Ovary (tissue), 10 donors: ENCODE measurements at regions of chr10 and their contacts with region 1.

Region 1: GRCh38 chr10:125160856-125161706 is 718 bp upstream of the CTBP2 start:
- DNase-seq: peak; percentile 81 to 85 (median 83)
- H3K4me3 ChIP-seq: peak overlapping the region; percentile 91
- H3K27ac ChIP-seq: peak overlapping the region; percentile 96 to 97
- H3K4me1 ChIP-seq: peaks cover 2% of the 10 kb centered on the region
- H3K27me3 ChIP-seq: no peaks in the 10 kb centered on the region
- CTCF ChIP-seq: peak in 2 of 3 donors; percentile 39 to 42
- EP300 ChIP-seq: no peak
- POLR2A ChIP-seq: peak; percentile 44

Region 2: DNA sequence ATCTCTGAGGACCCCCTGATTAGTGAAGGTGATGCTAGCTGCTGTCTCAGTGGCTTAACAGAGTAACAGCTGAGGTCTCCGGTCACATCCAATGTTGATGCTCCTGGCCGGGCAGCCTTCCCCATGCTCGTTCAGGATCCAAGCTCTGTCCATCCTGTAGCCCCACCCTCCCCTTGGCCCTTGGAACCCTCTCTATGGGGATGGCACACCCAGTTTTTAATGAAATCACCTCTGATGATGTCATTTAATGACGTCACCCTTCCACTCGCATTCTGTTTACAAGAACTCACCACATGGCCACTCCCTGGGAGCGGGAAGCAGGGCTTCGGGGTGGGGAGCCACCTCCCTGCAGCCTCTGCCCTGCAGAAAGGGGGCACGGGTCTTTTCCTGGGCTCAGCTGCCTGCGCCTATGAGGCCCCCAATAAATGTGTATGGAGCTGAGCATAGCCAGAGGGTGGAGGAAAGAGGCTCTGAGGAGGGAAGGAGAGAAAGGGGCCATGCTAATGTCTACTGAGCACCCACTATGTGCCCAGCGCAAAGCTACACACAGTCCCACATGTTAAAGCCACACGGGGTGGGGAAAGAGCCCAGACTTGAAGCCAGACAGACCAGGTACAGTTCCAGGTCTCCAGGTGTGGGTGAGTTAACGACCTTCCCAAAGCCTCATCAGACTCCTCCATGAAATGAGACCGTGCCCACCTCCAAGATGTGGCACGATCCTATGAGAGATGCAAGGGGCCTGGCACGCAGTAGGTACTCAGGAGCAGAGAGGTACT is 837.8 kb before region 1 on chr10:
- intact Hi-C with region 1: no loop called
- DNase-seq: peak in 1 of 5 donors; percentile 11
- H3K4me3 ChIP-seq: no peak overlapping the region
- H3K27ac ChIP-seq: no peak overlapping the region
- H3K4me1 ChIP-seq: no peaks in the 10 kb centered on the region
- H3K27me3 ChIP-seq: no peaks in the 10 kb centered on the region
- CTCF ChIP-seq: no peak
- EP300 ChIP-seq: no peak
- POLR2A ChIP-seq: no peak

Region 3: GRCh38 chr10:124911124-124912067 is 249.7 kb before region 1 on chr10:
- intact Hi-C with region 1: loop called in 2 of 4 experiments (anchors 2 to 5 kb)
- DNase-seq: peak in 1 of 5 donors; percentile 32
- H3K4me3 ChIP-seq: no peak overlapping the region
- H3K27ac ChIP-seq: peak overlapping the region; percentile 5 to 79
- H3K4me1 ChIP-seq: peaks cover 5% of the 10 kb centered on the region
- H3K27me3 ChIP-seq: no peaks in the 10 kb centered on the region
- CTCF ChIP-seq: no peak
- EP300 ChIP-seq: no peak
- POLR2A ChIP-seq: no peak

Region 4: DNA sequence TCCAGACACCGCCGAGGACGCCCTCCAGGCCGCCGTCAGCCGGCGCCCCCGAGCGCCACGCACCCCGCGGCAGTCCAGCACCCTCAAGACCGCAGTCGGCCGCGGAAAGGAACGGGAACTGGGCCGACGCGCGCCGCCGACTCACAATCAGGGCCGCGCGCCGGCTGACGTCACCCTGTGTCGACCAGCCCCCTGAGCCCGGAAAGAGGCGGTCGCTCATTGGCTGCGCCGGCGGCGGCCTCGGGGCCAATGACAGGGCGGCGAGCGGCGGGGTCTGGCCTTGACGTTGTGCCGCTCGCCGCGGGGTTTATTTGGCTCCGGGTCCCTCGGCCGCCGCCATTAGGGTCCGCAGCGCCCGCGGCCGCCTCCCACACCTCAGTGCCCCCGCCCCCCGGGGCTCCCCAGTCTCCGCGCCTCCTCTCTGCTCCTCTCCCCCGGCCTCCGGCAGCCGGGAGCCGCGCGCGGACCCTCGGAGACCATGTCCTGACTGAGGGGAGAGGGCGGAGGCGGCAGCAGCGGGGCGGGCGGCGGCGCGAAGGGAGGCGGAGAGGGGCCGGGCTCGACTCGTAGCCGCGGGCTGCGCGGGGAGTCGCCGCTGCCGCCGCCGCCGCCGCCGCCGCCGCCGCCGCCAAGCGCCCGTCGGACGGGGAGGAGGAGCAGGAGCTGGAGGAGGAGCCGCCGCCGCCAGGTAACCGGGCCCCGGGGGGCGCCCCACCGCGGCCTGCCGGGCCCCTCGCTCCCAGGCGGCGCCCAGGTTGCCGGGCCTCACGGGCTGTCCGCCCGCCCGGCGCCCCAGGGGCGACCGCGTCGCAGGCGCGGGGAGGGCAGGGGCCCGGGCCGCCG is 244.3 kb before region 1 on chr10:
- intact Hi-C with region 1: loop called in 2 of 4 experiments (anchors 2 to 5 kb)
- DNase-seq: peak; percentile 98 to 100 (median 99)
- H3K4me3 ChIP-seq: peak overlapping the region; percentile 77
- H3K27ac ChIP-seq: peak overlapping the region; percentile 97 to 98
- H3K4me1 ChIP-seq: peaks cover 6% of the 10 kb centered on the region
- H3K27me3 ChIP-seq: no peaks in the 10 kb centered on the region
- CTCF ChIP-seq: peak in 2 of 3 donors; percentile 14 to 23
- EP300 ChIP-seq: no peak
- POLR2A ChIP-seq: peak; percentile 95

Region 5: DNA sequence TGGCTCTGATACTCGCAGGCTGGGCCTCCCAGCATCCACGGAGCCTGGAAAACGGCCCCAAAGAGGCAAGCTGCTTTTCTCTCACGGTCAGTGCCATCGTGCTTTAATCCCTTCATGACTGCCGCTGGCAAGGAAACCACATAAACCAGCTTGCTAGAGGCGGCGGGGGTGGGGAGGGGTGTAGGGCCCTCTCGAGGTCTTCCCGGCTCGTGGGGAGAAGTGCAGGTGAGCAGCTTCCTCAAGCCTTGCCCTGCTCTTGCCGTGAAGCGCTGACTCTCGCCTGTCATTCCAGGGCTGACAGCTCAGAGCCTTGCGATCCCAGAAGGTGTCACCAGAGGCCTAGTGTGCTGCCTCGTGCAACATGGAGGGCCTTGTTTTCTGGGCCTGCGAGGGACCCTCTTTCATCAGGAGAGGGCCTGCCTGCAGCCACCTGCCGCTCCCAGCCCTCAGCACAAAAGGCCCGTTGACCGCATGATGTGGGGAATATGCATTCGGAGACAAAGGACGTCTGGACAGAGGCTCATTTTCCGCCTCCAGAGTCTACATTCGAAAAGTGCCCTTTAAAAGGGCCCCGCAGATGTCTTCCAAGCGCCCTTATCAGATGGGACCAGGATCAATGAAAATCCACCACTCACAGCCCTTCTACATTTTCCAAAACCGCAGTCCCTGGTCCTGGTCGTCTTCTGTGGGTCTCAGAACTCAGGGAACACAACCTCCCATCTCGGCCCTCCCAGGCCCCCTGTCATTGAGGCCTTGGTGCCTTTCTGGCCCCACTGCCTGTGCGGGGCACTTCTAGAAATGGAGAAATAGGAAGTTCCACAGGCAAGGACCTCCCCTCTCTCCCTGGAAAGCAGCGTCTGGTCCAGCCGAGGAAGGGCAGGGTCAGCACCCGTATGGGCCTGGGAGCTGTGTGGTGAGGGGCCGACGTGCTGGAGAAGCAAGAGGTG is 160.4 kb before region 1 on chr10:
- intact Hi-C with region 1: loop called in 1 of 4 experiments (anchors 5 kb)
- DNase-seq: peak in 4 of 5 donors; percentile 28 to 50 (median 46)
- H3K4me3 ChIP-seq: no peak overlapping the region
- H3K27ac ChIP-seq: peak overlapping the region; percentile 26 to 72
- H3K4me1 ChIP-seq: peaks cover 43% of the 10 kb centered on the region
- H3K27me3 ChIP-seq: no peaks in the 10 kb centered on the region
- CTCF ChIP-seq: peak in 1 of 3 donors; percentile 16
- EP300 ChIP-seq: no peak
- POLR2A ChIP-seq: no peak

Region 6: DNA sequence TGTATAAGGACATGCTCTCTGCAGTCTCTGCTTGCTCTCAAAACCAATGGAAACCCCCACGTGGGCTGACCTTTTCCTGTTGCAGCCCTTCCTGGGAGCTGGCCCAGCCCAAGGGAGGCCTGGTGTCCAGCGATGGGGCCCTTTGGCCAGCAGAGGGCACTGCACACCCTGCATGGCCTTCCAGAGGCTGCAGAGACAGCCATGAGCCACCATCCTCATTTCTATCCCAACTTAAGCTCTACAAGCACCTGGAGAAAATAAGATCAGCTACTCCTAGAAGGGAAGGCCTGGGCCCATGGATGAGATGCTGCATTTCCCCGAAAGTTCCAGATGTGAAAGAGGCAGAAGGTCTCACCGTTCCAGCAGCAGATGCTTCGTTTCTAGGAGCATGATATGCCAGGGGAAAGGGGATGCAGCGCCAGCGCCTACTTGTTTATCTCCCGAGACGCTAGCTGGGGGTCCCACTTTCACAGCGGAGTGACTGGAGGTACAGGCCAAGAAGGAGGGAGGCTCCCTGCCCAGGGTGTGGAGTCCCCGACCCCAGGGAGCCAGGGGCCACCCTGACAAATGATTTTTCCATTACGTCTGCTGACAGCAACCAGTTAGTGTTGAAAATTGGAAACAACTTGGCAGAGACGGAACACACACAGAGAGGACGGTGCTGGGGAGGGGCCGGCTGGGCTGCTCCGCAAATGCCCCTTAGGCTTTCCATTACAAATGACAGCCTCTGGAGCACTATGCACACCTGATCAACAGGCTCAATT is 112.8 kb before region 1 on chr10:
- intact Hi-C with region 1: loop called in 2 of 4 experiments (anchors 5 to 10 kb)
- DNase-seq: peak; percentile 87 to 93 (median 91)
- H3K4me3 ChIP-seq: no peak overlapping the region
- H3K27ac ChIP-seq: peak overlapping the region; percentile 54 to 79
- H3K4me1 ChIP-seq: peaks cover 28% of the 10 kb centered on the region
- H3K27me3 ChIP-seq: no peaks in the 10 kb centered on the region
- CTCF ChIP-seq: peak; percentile 90 to 96 (median 92)
- EP300 ChIP-seq: no peak
- POLR2A ChIP-seq: no peak

Region 7: DNA sequence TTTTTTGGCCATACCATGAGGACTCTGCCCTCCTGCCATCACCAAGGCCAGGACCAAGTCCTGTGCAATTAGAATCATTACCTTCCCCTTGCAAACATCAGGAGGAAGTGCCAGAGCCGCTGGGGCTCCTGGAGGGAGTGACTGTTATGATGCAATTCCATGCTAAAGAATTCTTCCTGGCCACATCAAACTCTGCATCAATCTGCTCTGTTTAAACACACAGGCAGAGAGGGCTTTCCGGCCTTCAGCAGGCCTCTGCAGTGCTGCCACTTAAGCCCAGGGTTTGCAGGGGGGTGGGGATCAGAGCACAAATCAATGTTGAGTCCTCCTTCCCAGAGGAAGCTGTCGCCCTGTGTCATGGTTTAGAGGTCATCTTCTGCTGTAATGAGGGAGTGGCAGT is 58.9 kb before region 1 on chr10:
- intact Hi-C with region 1: no loop called
- DNase-seq: peak in 3 of 5 donors; percentile 7 to 13 (median 10)
- H3K4me3 ChIP-seq: no peak overlapping the region
- H3K27ac ChIP-seq: no peak overlapping the region
- H3K4me1 ChIP-seq: peaks cover 11% of the 10 kb centered on the region
- H3K27me3 ChIP-seq: no peaks in the 10 kb centered on the region
- CTCF ChIP-seq: no peak
- EP300 ChIP-seq: no peak
- POLR2A ChIP-seq: no peak